ENCODE measurements at regions of chr2 and their contacts with region 1.

Region 1: DNA sequence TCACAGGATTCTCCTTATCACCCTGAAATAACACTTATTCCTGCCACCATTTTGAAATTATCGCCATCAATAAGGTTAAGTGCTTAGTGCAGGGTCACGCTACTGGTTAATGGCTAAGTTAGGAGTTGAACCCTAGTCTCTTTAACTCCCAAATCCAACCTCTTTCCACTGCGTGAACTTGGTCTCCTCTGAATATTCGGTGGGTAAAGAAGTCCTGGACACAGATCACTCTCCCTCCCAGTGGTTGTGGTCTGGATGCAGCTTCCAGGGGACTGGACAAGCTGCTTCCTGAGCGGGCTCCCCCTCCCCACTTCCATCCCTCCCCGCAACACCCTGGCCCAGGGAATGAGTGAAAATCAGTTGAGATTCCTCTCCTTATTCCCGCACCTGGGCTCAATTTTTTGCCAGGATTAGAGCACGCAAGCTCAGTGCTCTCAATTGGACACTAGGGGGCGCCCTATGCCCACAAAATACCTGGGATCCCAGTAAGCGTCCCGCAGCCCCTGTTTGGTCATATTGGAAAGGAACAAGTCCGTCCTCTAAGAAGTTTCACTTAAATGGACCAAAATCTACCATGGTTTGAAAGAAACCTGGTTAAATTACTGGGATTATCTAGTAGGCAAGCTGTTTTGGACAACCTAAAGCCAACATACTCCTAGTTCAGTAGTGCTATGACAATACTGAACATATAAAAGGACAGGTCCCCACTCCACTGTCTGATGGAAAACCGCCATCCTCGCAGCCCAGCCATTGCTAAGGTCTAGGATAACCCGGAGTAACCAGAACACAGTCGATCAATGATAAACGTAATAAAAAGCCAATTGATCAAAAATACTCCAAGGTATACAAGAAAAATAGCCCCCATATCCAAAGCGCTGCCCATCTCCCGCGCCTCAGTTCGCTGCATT is 40.4 kb downstream of the DHRS9 start:
- DNase-seq: peak; percentile 87
- ATAC-seq: peak; percentile 85
- H3K4me3 Mint-ChIP-seq: peak overlapping the region; percentile 47
- H3K27ac Mint-ChIP-seq: no peak overlapping the region
- H3K4me1 Mint-ChIP-seq: peaks cover 21% of the 10 kb centered on the region
- H3K27me3 Mint-ChIP-seq: 0 out of 2 replicates have a peak, but pooled peaks cover 2% of the 10 kb centered on the region
- CTCF ChIP-seq: peak; percentile 93

Region 2: DNA sequence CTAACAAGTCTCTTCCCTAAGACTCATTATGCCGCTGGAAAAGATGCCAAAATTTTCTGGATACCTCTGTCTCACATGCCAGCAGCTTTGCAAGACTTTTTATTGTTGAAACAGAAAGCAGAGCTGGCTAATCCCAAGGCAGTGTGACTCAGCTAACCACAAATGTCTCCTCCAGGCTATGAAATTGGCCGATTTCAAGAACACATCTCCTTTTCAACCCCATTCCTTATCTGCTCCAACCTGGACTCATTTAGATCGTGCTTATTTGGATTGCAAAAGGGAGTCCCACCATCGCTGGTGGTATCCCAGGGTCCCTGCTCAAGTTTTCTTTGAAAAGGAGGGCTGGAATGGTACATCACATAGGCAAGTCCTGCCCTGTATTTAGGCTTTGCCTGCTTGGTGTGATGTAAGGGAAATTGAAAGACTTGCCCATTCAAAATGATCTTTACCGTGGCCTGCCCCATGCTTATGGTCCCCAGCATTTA is 14.1 kb before region 1 on chr2:
- CTCF ChIA-PET with region 1: interaction called, 10 read pairs
- POLR2A ChIA-PET with region 1: no interaction called
- DNase-seq: no peak
- ATAC-seq: no peak
- H3K4me3 Mint-ChIP-seq: no peak overlapping the region
- H3K27ac Mint-ChIP-seq: no peak overlapping the region
- H3K4me1 Mint-ChIP-seq: no peaks in the 10 kb centered on the region
- H3K27me3 Mint-ChIP-seq: peaks cover 5% of the 10 kb centered on the region
- CTCF ChIP-seq: no peak

Region 3: DNA sequence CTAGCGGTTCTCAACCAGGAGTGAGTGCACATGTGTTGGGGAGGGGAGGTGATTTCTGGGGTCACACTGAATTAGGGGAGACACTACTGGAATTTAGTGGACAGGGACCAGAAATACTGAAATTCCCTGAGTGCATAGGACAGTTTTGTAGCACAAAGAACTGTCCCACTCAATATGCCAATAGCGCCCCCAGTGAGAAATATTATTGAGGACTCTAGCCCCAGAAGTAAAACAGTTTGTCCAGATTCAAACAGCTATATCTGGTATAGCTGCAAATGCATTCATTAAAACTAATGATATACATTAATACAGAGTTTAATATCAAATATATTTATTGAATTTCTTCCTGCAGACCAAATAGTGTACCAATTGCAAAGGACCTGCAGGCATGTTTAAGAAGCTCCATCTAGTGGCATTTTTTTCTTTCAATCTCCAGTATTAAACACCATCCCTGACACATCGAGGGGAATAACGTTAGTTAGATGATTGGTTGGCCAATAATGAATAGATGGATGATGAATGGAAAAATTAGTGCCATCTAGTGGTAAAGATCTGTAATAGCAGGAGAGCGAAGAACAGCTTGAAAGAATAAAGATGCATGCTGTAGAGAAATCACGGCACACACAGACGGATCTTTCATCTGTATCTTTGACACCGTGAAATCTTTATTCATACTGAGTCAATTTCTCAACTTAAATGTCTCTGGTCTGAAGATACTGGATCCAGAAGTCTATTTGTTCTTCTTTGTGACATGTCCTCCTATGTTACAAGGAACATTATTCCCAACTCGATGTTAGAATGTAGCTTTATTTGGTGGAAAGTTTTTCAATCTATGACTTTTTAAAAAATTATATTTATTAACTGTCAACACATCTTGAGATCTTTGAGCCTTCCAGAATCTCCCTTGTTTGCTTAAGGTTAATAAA is 22.1 kb after region 1 on chr2:
- CTCF ChIA-PET with region 1: interaction called, 37 read pairs
- POLR2A ChIA-PET with region 1: no interaction called
- DNase-seq: no peak
- ATAC-seq: no peak
- H3K4me3 Mint-ChIP-seq: no peak overlapping the region
- H3K27ac Mint-ChIP-seq: no peak overlapping the region
- H3K4me1 Mint-ChIP-seq: peaks cover 6% of the 10 kb centered on the region
- H3K27me3 Mint-ChIP-seq: no peaks in the 10 kb centered on the region
- CTCF ChIP-seq: peak; percentile 70

Region 4: GRCh38 chr2:169141713-169142352 is 32.1 kb after region 1 on chr2:
- CTCF ChIA-PET with region 1: interaction called, 90 read pairs
- POLR2A ChIA-PET with region 1: no interaction called
- DNase-seq: peak; percentile 78
- ATAC-seq: peak; percentile 74
- H3K4me3 Mint-ChIP-seq: no peak overlapping the region
- H3K27ac Mint-ChIP-seq: no peak overlapping the region
- H3K4me1 Mint-ChIP-seq: peaks cover 43% of the 10 kb centered on the region
- H3K27me3 Mint-ChIP-seq: no peaks in the 10 kb centered on the region
- CTCF ChIP-seq: peak; percentile 79

Region 5: GRCh38 chr2:169221745-169222369 is 112.1 kb after region 1 on chr2:
- CTCF ChIA-PET with region 1: interaction called, 73 read pairs
- POLR2A ChIA-PET with region 1: no interaction called
- DNase-seq: no peak
- ATAC-seq: peak; percentile 66
- H3K4me3 Mint-ChIP-seq: no peak overlapping the region
- H3K27ac Mint-ChIP-seq: no peak overlapping the region
- H3K4me1 Mint-ChIP-seq: no peaks in the 10 kb centered on the region
- H3K27me3 Mint-ChIP-seq: no peaks in the 10 kb centered on the region
- CTCF ChIP-seq: no peak

Region 6: DNA sequence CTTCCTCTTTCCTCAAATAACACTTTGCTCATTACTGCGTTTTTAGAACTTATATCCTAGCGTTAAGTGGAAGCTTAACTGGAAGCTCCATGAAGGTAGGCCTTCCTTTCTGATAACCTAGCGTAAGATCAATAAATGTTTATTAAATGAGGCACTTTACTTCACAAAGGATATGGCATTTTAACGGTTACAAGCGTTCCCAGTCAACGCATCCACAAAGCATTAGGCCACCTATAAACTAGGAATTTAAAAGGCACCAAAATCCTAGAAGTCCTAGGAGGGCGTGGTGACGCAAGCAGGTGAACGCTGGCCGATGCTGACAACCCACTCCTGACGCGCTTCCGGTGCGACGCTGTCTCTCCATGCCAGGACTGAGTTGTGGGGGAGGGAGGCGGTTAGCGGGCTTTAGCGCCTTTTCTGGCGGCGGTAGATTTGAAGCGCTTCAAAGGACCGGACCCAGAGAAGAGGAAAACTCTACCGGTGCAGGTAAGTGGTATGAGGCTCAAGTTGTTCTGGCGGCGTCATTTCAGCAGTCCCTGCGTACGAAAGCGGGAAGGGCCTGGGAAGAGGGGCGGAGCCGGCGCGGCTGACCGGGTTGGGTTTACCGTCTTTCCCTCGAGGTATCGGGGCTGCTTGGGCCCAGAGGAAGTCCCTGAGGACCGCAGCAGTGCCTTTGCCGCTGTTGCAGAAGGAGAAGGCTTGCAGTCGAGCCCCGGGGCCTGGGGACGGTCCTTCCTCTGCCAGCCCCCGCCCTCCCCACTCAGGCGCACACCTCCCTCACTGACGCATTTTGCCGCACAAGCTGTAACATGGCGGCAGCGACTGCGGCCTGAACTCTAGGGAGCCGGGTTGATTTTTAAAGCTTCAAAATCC is 474.5 kb after region 1 on chr2 and contains the start of gene PPIG:
- CTCF ChIA-PET with region 1: no interaction called
- POLR2A ChIA-PET with region 1: no interaction called
- DNase-seq: peak; percentile 81
- ATAC-seq: peak; percentile 89
- H3K4me3 Mint-ChIP-seq: peak within 1 kb of the TSS; percentile 99
- H3K27ac Mint-ChIP-seq: peak within 1 kb of the TSS; percentile 99
- H3K4me1 Mint-ChIP-seq: peaks cover 13% of the 10 kb centered on the region
- H3K27me3 Mint-ChIP-seq: peaks cover 5% of the 10 kb centered on the region; the same call in 1 of the 2 replicates
- CTCF ChIP-seq: no peak
- total RNA-seq, gene PPIG: 63.7 to 77.7 TPM (median 72.2 TPM) in 3 replicates